ENCODE measurements at regions of chr11 and their contacts with region 1.

Region 1: GRCh38 chr11:6362873-6363678 is 27.2 kb upstream of the SMPD1 start:
- DNase-seq: peak; percentile 88 to 91 (median 89)
- ATAC-seq: peak; percentile 83
- H3K4me3 ChIP-seq: no peak overlapping the region
- H3K27ac ChIP-seq: peak overlapping the region; percentile 6 to 80 (median 32)
- H3K4me1 ChIP-seq: peaks cover 46% of the 10 kb centered on the region
- H3K27me3 ChIP-seq: no peaks in the 10 kb centered on the region
- CTCF ChIP-seq: peak; percentile 64 to 90 (median 87)
- POLR2A ChIP-seq: no peak

Region 2: DNA sequence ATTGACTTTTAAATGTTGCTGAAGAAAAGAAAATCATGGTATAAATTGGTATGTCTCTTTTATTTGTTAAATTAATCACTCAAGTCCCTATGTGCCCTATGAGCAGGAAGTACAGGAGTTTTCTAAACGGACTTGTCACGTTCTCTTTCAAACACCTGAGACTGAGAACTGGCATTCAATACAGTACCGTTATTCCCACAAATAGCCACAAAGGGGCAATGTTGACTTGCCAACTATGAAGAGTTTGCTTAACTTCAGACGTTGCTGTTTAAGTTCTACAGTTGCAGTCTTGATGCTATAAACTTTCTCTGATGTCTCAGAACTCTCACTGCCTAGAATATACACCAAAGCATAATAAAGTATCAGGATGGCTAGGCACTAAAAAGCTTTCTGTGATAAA is 340.1 kb before region 1 on chr11:
- intact Hi-C with region 1: loop called (anchors 10 kb)
- DNase-seq: peak in 2 of 4 donors; percentile 9 to 58
- ATAC-seq: peak; percentile 70
- H3K4me3 ChIP-seq: no peak overlapping the region
- H3K27ac ChIP-seq: no peak overlapping the region
- H3K4me1 ChIP-seq: no peaks in the 10 kb centered on the region
- H3K27me3 ChIP-seq: no peaks in the 10 kb centered on the region
- CTCF ChIP-seq: peak; percentile 30 to 72 (median 57)
- POLR2A ChIP-seq: no peak